SK-N-SH (cell line): ENCODE measurements at regions of chr5 and their contacts with region 1.

Region 1: DNA sequence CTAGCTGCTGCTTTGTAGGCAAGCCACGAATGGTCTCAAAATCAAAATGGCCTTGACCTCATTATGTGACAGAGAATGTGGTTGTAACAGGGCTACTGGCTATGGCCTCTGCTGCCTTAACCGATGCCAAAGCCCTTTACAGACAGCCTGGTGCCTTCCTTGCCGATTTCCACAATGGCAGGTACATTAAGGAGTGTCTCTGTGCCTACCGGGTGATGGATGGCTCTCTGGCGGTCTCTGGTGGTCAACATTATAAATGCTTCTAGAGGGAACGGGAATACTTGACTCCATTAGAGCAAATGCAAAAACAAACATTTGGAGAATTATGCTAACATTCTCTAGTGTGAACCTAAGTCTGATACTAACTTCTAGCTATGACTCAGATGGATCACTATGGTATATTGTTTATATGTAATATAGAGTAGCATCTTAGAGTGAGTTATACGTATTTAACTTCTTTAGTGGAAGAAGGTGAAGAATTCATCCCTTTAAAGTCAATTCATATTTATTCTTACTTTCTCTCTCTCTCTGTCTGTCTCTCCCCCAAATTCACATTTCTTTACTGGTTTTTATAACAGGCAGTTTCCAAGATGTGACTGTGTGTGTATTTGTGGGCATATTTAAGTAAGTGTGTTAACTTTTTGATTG is 52.5 kb downstream of the RPS23 start:
- DNase-seq: peak; percentile 65
- H3K4me3 ChIP-seq: no peak overlapping the region; a peak in 1 of 4 replicates
- H3K27ac ChIP-seq: no peak overlapping the region
- H3K4me1 ChIP-seq: peaks cover 0 to 9% of the 10 kb centered on the region in 2 experiments; a peak in 2 of 4 replicates
- H3K27me3 ChIP-seq: no peaks in the 10 kb centered on the region
- CTCF ChIP-seq: peak; percentile 92
- EP300 ChIP-seq: no peak
- RAD21 ChIP-seq: peak; percentile 94

Region 2: GRCh38 chr5:81425569-81425968 is 800.1 kb before region 1 on chr5:
- CTCF ChIA-PET with region 1: interaction called, 15 read pairs
- POLR2A ChIA-PET with region 1: no interaction called
- DNase-seq: peak; percentile 45
- H3K4me3 ChIP-seq: no peak overlapping the region; a peak in 1 of 4 replicates
- H3K27ac ChIP-seq: peak overlapping the region in 1 of 2 experiments; percentile 30; a peak in 1 of 4 replicates
- H3K4me1 ChIP-seq: peaks cover 2 to 25% of the 10 kb centered on the region in 2 experiments
- H3K27me3 ChIP-seq: no peaks in the 10 kb centered on the region
- CTCF ChIP-seq: peak; percentile 76
- EP300 ChIP-seq: no peak
- RAD21 ChIP-seq: peak; percentile 75

Region 3: DNA sequence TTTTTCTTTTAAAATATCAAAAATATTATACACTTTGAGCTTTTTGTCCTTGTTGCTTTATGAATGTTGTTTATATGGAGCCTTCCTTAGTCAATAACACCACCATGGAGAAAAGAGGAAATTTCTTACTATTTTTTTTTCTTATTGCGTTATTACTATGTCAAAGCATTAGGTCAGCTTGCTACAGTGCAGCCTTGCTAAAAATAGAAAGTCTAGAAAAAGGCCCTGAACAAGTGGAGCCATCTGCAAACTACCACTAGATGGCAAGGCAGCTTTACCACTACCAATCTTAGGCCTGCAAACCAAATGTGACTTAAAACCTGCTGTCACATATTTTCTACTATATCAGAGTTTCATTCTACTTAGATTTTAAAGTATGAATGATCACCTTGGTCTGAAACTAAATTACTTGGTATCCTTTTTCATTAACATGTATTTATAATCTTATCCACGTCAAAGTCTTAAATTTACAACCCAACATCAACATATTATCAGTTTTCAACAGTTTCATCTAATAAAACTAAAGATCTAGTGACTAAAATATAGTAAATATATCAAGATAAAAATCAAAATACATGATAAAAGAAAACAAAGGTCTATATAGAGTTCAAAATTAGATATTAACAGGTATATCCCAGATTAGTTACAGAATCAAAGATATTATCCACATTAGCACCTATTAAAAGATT is 718.6 kb before region 1 on chr5:
- CTCF ChIA-PET with region 1: interaction called, 10 read pairs
- POLR2A ChIA-PET with region 1: no interaction called
- DNase-seq: peak; percentile 66
- H3K4me3 ChIP-seq: no peak overlapping the region; a peak in 1 of 4 replicates
- H3K27ac ChIP-seq: peak overlapping the region in 1 of 2 experiments; percentile 50; a peak in 2 of 4 replicates
- H3K4me1 ChIP-seq: peaks cover 0 to 9% of the 10 kb centered on the region in 2 experiments; a peak in 2 of 4 replicates
- H3K27me3 ChIP-seq: no peaks in the 10 kb centered on the region
- CTCF ChIP-seq: peak; percentile 96
- EP300 ChIP-seq: peak in 1 of 2 experiments; percentile 29; a peak in 1 of 4 replicates
- RAD21 ChIP-seq: peak; percentile 98

Region 4: DNA sequence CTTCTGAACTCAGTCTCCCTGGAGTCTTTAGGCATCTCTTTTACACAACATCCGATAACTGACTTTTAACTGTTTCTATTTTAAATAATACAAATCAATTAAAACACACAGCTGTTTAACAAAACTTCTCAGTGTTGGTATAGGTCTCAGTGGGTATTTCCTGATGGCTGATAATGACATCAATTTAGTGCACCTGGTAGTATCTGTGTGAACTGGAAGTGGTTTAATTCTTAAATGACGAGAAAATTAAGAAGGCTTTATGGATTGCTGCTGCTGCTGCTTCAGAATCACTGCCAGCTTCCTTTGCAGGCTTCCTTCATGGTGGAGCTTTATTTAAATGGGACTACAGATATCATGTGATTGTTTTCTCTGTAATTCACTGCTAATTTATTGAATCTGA is 39.8 kb before region 1 on chr5:
- CTCF ChIA-PET with region 1: interaction called, 10 read pairs
- POLR2A ChIA-PET with region 1: no interaction called
- DNase-seq: no peak
- H3K4me3 ChIP-seq: no peak overlapping the region
- H3K27ac ChIP-seq: no peak overlapping the region
- H3K4me1 ChIP-seq: no peaks in the 10 kb centered on the region; a peak in 2 of 4 replicates
- H3K27me3 ChIP-seq: no peaks in the 10 kb centered on the region
- CTCF ChIP-seq: no peak
- EP300 ChIP-seq: no peak
- RAD21 ChIP-seq: no peak